Common myeloid progenitor, CD34-positive (primary cell): ENCODE measurements at regions of chr10 and their contacts with region 1.

Region 1: DNA sequence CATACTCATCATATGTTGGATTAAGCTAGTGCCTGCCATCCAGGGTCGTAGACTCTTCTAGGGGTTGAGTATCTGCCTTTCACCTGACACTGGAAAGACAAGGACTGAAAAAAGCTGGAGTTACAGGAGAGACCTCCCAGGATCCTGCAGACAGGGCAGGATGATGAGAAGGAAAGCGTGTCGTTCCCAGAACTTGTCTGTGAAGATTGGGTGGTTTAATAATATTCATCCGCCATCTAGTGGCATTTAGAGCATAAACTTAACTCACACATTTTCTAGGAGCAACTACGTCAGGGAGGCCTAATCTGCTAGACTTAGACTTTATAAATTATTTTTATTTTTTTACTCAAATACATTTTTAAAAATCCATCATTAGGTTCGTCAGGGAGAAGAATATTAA is 59.6 kb downstream of the ADRB1 start:
- DNase-seq: peak; percentile 51 to 62 (median 53)
- H3K4me3 ChIP-seq: no peak overlapping the region
- H3K27ac ChIP-seq: no peak overlapping the region
- H3K4me1 ChIP-seq: peaks cover 0 to 24% (median 17%) of the 10 kb centered on the region in 4 experiments
- H3K27me3 ChIP-seq: peaks cover 0 to 17% (median 9%) of the 10 kb centered on the region in 5 experiments

Region 2: GRCh38 chr10:113802997-113803396 is 300.3 kb before region 1 on chr10:
- CTCF ChIA-PET with region 1: interaction called, 32 read pairs
- POLR2A ChIA-PET with region 1: no interaction called
- DNase-seq: peak; percentile 35 to 82 (median 66)
- H3K4me3 ChIP-seq: no peak overlapping the region
- H3K27ac ChIP-seq: no peak overlapping the region
- H3K4me1 ChIP-seq: peaks cover 0 to 14% (median 6%) of the 10 kb centered on the region in 4 experiments
- H3K27me3 ChIP-seq: peaks cover 0 to 2% (median 0%) of the 10 kb centered on the region in 5 experiments

Region 3: DNA sequence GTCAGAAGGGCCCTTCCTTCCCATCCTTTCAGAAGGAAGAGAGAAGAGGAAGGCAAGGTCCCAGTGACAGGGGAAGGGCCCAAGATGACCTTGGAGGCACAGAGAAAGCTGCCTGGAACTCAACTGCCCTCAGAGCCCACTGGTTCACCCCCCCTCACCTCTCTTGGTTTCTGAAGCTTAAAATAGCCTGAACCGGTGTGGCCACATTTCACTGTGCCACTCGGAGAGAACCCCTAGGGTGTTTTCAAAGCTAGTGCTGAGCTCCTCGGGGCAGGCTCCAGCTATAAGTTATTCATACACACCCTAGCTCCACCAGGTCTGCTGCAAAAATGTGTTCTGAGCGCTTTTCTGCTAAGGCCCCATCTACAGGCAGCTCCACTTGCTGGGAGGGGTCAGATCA is 120.5 kb before region 1 on chr10:
- CTCF ChIA-PET with region 1: interaction called, 14 read pairs
- POLR2A ChIA-PET with region 1: no interaction called
- DNase-seq: peak in 1 of 3 donors; percentile 10
- H3K4me3 ChIP-seq: no peak overlapping the region
- H3K27ac ChIP-seq: no peak overlapping the region
- H3K4me1 ChIP-seq: peaks cover 0 to 17% (median 15%) of the 10 kb centered on the region in 4 experiments
- H3K27me3 ChIP-seq: no peaks in the 10 kb centered on the region

Region 4: GRCh38 chr10:114083040-114083439 is 20.2 kb before region 1 on chr10:
- CTCF ChIA-PET with region 1: interaction called, 11 read pairs
- POLR2A ChIA-PET with region 1: no interaction called
- DNase-seq: peak in 1 of 3 donors; percentile 44
- H3K4me3 ChIP-seq: no peak overlapping the region
- H3K27ac ChIP-seq: no peak overlapping the region
- H3K4me1 ChIP-seq: peaks cover 0 to 4% (median 1%) of the 10 kb centered on the region in 4 experiments
- H3K27me3 ChIP-seq: no peaks in the 10 kb centered on the region